ENCODE measurements at regions of chr6 and their contacts with region 1.

Region 1: GRCh38 chr6:132830334-132830751 is 16.0 kb downstream of the RPS12 start:
- DNase-seq: no peak
- H3K4me3 ChIP-seq: no peak overlapping the region
- H3K27ac ChIP-seq: no peak overlapping the region
- H3K4me1 ChIP-seq: no peaks in the 10 kb centered on the region
- H3K27me3 ChIP-seq: no peaks in the 10 kb centered on the region
- CTCF ChIP-seq: peak; percentile 85

Region 2: GRCh38 chr6:132937466-132937906 is 107.1 kb after region 1 on chr6:
- CTCF ChIA-PET with region 1: no interaction called
- POLR2A ChIA-PET with region 1: no interaction called
- intact Hi-C with region 1: loop called (anchors 5 kb)
- DNase-seq: peak in 1 of 2 experiments; percentile 56
- H3K4me3 ChIP-seq: no peak overlapping the region
- H3K27ac ChIP-seq: no peak overlapping the region
- H3K4me1 ChIP-seq: no peaks in the 10 kb centered on the region
- H3K27me3 ChIP-seq: no peaks in the 10 kb centered on the region
- CTCF ChIP-seq: peak; percentile 74

Region 3: GRCh38 chr6:133184798-133185372 is 354.5 kb after region 1 on chr6:
- CTCF ChIA-PET with region 1: interaction called, 10 read pairs
- POLR2A ChIA-PET with region 1: no interaction called
- intact Hi-C with region 1: loop called (anchors 5 kb)
- DNase-seq: no peak
- H3K4me3 ChIP-seq: no peak overlapping the region
- H3K27ac ChIP-seq: no peak overlapping the region
- H3K4me1 ChIP-seq: no peaks in the 10 kb centered on the region
- H3K27me3 ChIP-seq: no peaks in the 10 kb centered on the region
- CTCF ChIP-seq: peak; percentile 92

Region 4: GRCh38 chr6:133553652-133554051 is 723.3 kb after region 1 on chr6:
- CTCF ChIA-PET with region 1: interaction called, 6 read pairs
- POLR2A ChIA-PET with region 1: no interaction called
- intact Hi-C with region 1: loop called (anchors 1 kb)
- DNase-seq: peak in 1 of 2 experiments; percentile 38
- H3K4me3 ChIP-seq: no peak overlapping the region
- H3K27ac ChIP-seq: no peak overlapping the region
- H3K4me1 ChIP-seq: no peaks in the 10 kb centered on the region
- H3K27me3 ChIP-seq: no peaks in the 10 kb centered on the region
- CTCF ChIP-seq: peak; percentile 89